Heart left ventricle (tissue), 16 donors: ENCODE measurements at regions of chr7 and their contacts with region 1.

Region 1: DNA sequence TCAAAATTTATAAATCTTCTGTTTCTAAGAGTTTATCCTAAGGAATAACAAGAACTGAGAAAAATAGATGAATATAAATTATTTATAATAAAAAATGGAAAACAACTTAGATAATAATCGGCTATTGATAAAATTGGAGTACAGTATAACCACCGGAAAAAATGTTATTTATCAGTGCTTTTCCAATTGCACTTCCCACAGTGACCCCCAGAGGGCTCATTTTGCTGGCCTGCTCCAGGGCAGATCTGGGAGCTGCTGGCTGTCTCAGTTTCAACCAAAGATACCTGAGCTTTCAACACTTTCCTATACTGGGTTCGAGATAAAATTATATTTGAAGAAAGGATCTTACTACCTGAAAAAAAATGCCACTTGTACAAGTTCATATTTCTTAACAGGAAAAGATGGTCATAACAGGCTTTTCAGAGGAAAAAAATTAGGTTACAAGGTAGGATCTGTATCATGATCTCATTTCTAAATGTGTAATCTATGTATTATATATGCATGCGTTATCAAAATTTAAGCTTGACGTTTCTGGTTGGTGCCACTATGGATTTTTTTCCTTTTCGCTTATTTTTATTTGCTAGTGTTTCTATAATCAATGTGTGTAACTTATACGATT is 165.7 kb downstream of the NPSR1 start:
- DNase-seq: peak in 3 of 5 donors; percentile 32 to 38 (median 36)
- ATAC-seq: peak in 2 of 4 donors; percentile 38 to 63
- H3K4me3 ChIP-seq: no peak overlapping the region
- H3K27ac ChIP-seq: no peak overlapping the region
- H3K4me1 ChIP-seq: no peaks in the 10 kb centered on the region
- H3K27me3 ChIP-seq: no peaks in the 10 kb centered on the region
- CTCF ChIP-seq: peak; percentile 75 to 89 (median 83)
- POLR2A ChIP-seq: no peak

Region 2: DNA sequence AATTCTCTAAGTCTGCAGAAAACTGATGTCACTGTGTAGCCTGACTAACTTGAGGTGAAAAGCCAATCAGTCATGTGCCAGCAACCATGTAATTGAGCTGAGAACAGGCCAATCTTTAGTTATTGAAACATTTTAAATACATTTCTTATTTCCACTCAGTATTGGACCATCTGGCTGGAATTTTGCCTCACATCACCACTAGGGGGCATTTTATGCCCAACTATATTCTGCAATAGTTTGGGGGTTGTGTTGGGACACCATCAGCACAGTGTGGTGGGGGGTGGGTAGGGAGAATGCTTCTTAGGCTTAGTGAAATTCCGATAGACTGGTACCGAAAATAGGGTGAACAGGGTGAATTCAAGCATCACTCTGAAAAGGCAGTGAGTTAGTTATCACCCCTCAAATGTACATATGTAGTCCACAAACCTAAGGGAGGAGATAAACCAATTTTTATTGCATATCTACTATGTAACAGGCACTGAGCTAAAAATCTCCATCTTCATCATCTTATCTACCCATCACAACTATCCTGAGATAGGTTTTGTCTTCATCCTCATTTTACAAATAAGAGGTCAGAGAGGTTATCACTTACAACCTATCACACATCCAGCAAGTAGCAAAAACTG is 147.9 kb before region 1 on chr7:
- intact Hi-C with region 1: loop called in 2 of 10 experiments (anchors 5 to 10 kb)
- DNase-seq: no peak
- ATAC-seq: peak in 2 of 4 donors; percentile 57 to 65
- H3K4me3 ChIP-seq: no peak overlapping the region
- H3K27ac ChIP-seq: no peak overlapping the region
- H3K4me1 ChIP-seq: no peaks in the 10 kb centered on the region
- H3K27me3 ChIP-seq: no peaks in the 10 kb centered on the region
- CTCF ChIP-seq: peak; percentile 40 to 63 (median 48)
- POLR2A ChIP-seq: no peak

Region 3: DNA sequence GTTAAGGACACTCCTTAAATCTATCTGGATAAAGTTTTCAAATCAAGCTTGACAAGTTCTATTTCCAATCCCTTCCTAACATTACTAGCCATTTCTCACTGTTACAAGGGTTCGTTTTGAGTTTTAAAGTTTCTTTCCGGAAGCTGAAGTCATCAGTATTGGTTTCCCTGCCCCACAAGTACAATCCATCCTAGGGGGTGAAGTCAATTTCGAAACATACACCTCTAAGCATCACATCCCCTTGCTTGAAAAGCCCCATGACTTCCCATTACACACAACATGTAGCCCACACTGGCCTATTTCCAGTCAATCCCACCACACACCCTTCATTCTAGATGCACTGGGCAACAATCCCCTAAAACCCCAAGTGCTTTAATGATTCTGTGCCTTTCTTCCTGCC is 200.5 kb after region 1 on chr7:
- intact Hi-C with region 1: loop called in 1 of 10 experiments (anchors 5 kb)
- DNase-seq: no peak
- ATAC-seq: no peak
- H3K4me3 ChIP-seq: no peak overlapping the region
- H3K27ac ChIP-seq: no peak overlapping the region
- H3K4me1 ChIP-seq: peaks cover 0 to 29% (median 4%) of the 10 kb centered on the region in 12 donors
- H3K27me3 ChIP-seq: no peaks in the 10 kb centered on the region
- CTCF ChIP-seq: no peak
- POLR2A ChIP-seq: no peak

Region 4: GRCh38 chr7:35037526-35038339 is 214.0 kb after region 1 on chr7:
- intact Hi-C with region 1: loop called in 7 of 10 experiments (anchors 5 to 10 kb)
- DNase-seq: peak; percentile 95 to 97 (median 96)
- ATAC-seq: peak; percentile 86 to 94 (median 89)
- H3K4me3 ChIP-seq: peak overlapping the region; percentile 55 to 91 (median 76)
- H3K27ac ChIP-seq: peak overlapping the region; percentile 64 to 95 (median 90)
- H3K4me1 ChIP-seq: peaks cover 0 to 32% (median 24%) of the 10 kb centered on the region in 12 donors
- H3K27me3 ChIP-seq: no peaks in the 10 kb centered on the region
- CTCF ChIP-seq: peak; percentile 75 to 96 (median 86)
- POLR2A ChIP-seq: peak in 1 of 2 donors; percentile 48

Region 5: DNA sequence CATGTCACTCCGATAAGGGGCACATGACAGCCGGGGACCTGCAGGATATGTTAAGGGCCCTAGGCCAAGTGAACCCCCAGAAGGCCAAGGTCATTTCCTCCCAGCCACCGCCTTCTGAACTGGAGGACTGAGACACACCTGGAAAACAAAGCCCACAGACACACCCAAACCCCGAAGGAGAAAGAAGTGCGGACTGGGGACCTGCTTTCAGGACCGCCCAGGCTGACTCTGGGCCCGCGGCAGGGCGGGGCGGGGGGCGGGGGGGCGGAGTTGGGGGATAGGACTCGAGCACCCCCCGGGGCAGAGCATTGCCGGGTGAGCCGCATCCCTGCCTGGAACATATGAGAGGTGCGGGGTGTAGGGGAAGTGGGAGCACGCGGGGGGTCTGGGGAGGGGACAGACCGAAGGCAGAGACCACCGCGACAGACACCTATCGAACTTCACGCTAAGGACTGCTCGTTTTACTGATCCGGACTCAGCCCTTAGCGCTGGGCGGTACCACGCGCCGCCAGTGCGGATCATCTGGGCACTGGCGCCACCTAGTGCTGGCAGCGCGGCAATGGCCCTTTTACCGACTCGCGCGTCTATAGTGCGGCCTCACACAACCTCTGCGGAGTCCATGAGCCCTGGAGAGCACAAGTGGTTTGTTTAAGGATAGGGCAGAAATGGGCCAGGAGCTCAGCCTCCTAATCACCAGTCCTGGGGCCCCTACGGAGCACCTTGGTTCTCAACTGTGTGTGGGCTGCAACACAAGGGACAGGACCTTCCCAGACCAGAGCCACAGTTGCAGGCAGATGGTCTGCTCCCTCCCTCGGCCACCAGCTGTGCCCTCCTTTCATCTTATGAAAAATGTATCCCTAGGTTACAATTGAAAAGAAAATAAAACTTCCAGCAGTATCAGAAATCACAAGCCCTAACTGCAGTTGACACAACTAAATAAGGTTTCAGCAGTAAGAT is 713.6 kb after region 1 on chr7:
- intact Hi-C with region 1: loop called in 3 of 10 experiments (anchors 10 kb)
- DNase-seq: peak; percentile 67 to 89 (median 76)
- ATAC-seq: peak; percentile 94 to 98 (median 97)
- H3K4me3 ChIP-seq: peak overlapping the region; percentile 14 to 55 (median 50)
- H3K27ac ChIP-seq: peak overlapping the region in 2 of 12 donors; percentile 28 to 30
- H3K4me1 ChIP-seq: peaks cover 0 to 9% (median 3%) of the 10 kb centered on the region in 12 donors
- H3K27me3 ChIP-seq: peaks cover 0 to 5% (median 0%) of the 10 kb centered on the region in 9 donors
- CTCF ChIP-seq: peak; percentile 81 to 96 (median 93)
- POLR2A ChIP-seq: no peak